ENCODE measurements at regions of chr3 and their contacts with region 1.

Region 1: GRCh38 chr3:25789596-25790556 is at the start of gene OXSM:
- DNase-seq: peak; percentile 96
- H3K4me3 Mint-ChIP-seq: peak within 1 kb of the TSS; percentile 94
- H3K27ac Mint-ChIP-seq: peak within 1 kb of the TSS; percentile 92
- H3K4me1 Mint-ChIP-seq: peaks cover 44% of the 10 kb centered on the region
- H3K27me3 Mint-ChIP-seq: no peaks in the 10 kb centered on the region
- total RNA-seq, gene OXSM: 15.1 to 16.1 TPM

Region 2: GRCh38 chr3:25110642-25111041 is 679.2 kb before region 1 on chr3:
- CTCF ChIA-PET with region 1: no interaction called
- POLR2A ChIA-PET with region 1: no interaction called
- intact Hi-C with region 1: no loop called
- DNase-seq: no peak
- H3K4me3 Mint-ChIP-seq: no peak overlapping the region
- H3K27ac Mint-ChIP-seq: no peak overlapping the region
- H3K4me1 Mint-ChIP-seq: no peaks in the 10 kb centered on the region
- H3K27me3 Mint-ChIP-seq: no peaks in the 10 kb centered on the region

Region 3: DNA sequence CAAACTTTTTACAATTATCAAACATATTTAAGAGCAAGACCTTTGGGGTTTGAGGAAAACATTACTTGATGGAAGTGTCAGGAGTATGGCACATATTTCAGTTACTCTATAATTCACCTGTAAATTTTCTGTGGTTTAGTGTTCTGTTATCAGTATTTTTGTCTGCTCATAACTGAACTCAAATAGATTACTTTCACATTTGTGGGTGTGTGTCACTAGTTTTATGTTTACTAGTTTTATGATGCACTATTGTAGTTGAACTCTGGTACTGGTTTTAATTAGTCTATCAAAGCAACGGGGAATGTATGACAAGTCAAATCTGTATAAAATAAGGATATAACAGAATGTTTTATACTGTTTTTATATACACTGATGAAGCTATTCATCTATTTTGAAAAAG is 27.2 kb after region 1 on chr3:
- CTCF ChIA-PET with region 1: interaction called, 3 read pairs
- POLR2A ChIA-PET with region 1: interaction called, 3 read pairs
- intact Hi-C with region 1: loop called (anchors 1 kb)
- DNase-seq: no peak
- H3K4me3 Mint-ChIP-seq: no peak overlapping the region
- H3K27ac Mint-ChIP-seq: no peak overlapping the region
- H3K4me1 Mint-ChIP-seq: peaks cover 9% of the 10 kb centered on the region
- H3K27me3 Mint-ChIP-seq: peaks cover 1% of the 10 kb centered on the region

Region 4: GRCh38 chr3:25856902-25857518 is 67.1 kb after region 1 on chr3:
- CTCF ChIA-PET with region 1: interaction called, 4 read pairs
- POLR2A ChIA-PET with region 1: no interaction called
- intact Hi-C with region 1: loop called (anchors 2 kb)
- DNase-seq: no peak
- H3K4me3 Mint-ChIP-seq: no peak overlapping the region
- H3K27ac Mint-ChIP-seq: no peak overlapping the region
- H3K4me1 Mint-ChIP-seq: no peaks in the 10 kb centered on the region
- H3K27me3 Mint-ChIP-seq: no peaks in the 10 kb centered on the region